AG04450 (cell line): ENCODE measurements at regions of chr2 and their contacts with region 1.

Region 1: GRCh38 chr2:86221066-86221684 is 21.9 kb downstream of the MRPL35 start:
- DNase-seq: no peak
- H3K4me3 ChIP-seq: no peak overlapping the region
- H3K27ac ChIP-seq: no peak overlapping the region
- H3K27me3 ChIP-seq: no peaks in the 10 kb centered on the region
- CTCF ChIP-seq: peak; percentile 92

Region 2: DNA sequence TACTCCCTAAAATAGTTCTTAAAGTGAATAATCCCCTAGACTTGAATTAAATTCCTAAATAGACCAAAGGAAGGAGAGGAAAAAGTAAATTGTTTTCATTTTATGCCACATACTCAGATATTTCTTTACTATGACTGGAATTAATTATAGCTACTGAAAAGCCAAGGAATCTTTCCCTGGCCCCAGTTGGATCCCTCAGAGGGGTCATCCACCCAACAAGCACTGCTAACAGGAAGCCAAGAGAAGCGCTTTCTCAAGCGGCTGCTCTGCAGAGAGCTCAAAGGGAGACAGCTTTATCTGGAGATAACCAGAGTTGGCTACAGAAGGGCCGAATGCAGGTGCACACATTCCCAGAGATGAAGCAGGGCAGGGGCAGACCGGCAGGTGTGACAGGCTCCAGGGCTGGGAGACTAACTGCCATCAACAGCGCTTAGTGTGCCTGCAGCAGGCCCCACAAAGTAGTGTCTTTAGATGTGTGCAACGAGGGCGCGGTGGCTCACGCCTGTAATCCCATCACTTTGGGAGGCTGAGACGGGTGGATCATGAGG is 166.6 kb before region 1 on chr2:
- CTCF ChIA-PET with region 1: no interaction called
- POLR2A ChIA-PET with region 1: no interaction called
- DNase-seq: no peak
- H3K4me3 ChIP-seq: no peak overlapping the region
- H3K27ac ChIP-seq: no peak overlapping the region
- H3K27me3 ChIP-seq: no peaks in the 10 kb centered on the region
- CTCF ChIP-seq: no peak

Region 3: DNA sequence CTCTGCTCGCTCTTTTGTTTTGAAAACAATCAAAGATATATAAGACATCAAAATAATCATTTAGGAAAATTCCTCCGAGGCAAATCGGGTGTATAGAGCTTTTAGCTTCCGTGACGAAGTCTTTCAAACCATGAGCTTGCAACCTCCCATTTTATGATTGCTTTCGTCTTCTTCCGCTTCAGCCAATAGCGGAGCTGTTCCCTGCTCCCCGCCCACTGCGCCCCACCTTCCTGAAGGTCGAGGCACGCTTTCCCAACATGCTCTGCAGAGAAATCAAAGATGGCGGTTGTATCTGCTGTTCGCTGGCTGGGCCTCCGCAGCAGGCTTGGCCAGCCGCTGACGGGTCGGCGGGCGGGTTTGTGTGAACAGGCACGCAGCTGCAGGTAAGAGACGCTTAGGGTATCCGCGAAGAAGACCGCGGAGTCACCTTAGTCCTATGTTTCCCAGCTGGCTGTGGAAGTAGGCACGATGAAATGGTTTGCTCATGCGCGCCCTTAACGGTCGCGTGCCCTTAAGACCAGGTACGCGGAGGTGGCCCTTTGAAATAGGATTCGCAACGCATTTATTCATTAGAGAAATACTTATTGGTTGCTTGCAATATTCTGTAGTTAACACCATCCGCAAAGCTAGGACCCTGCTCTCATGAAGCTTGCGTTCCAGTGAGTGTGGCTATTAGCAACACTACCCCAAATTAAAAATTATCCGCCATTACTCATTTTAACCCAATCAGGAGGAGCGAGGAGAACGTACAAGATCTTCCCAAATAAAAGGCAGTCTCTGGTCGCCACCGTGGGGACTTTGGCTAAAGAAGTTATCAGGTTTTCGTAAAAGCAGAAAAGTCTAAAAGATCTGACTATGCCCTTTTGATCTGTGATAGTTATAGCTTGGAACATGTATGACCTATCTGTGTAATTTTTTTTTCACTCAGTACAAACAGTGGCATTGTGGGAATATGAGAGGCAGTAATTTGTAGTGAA is 114.9 kb before region 1 on chr2 and contains the start of gene PTCD3:
- CTCF ChIA-PET with region 1: no interaction called
- POLR2A ChIA-PET with region 1: no interaction called
- DNase-seq: peak; percentile 81
- H3K4me3 ChIP-seq: peak within 1 kb of the TSS; percentile 93
- H3K27ac ChIP-seq: peak within 1 kb of the TSS; percentile 69
- H3K27me3 ChIP-seq: no peaks in the 10 kb centered on the region
- CTCF ChIP-seq: no peak
- polyA plus RNA-seq, gene PTCD3: 71.8 and 90.2 TPM in 2 replicates

Region 4: GRCh38 chr2:86323273-86324021 is 102.3 kb after region 1 on chr2:
- CTCF ChIA-PET with region 1: no interaction called
- POLR2A ChIA-PET with region 1: no interaction called
- DNase-seq: no peak
- H3K4me3 ChIP-seq: no peak overlapping the region
- H3K27ac ChIP-seq: no peak overlapping the region
- H3K27me3 ChIP-seq: peaks cover 4% of the 10 kb centered on the region
- CTCF ChIP-seq: no peak

Region 5: DNA sequence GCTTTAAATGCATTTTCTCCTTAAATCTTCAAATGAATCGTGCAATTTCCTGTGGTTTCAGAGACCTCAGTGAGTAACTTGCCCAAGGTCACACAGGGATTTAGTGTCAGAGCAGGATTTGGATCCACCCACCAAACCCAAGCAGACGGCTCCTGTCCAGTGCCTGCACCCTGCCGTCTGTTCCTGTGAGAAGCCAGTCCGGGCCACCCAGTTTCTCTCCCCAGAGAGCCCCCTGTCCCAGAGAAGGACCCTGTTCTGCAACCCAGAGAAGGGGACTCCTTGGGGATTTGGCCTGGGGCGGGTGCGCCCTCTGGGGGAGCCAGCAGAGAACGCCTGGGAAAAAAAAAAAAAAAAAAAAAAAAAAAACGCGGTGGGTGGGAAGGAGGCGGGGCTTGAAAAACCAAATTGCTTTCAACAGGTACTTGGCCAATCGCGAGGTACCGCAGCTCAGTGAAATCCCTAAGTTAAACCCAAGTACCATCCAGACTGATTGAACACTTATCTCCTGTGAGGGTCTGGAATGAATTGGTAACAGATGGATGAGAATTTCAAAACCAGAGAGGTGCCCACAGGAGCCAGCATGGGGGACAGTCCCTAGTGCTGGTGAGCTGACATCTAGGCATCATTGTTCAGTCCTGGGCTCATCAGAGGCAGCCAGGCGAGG is 147.1 kb after region 1 on chr2:
- CTCF ChIA-PET with region 1: interaction called, 120 read pairs
- POLR2A ChIA-PET with region 1: no interaction called
- DNase-seq: no peak
- H3K4me3 ChIP-seq: no peak overlapping the region
- H3K27ac ChIP-seq: no peak overlapping the region
- H3K27me3 ChIP-seq: peaks cover 3% of the 10 kb centered on the region
- CTCF ChIP-seq: peak; percentile 68

Region 6: DNA sequence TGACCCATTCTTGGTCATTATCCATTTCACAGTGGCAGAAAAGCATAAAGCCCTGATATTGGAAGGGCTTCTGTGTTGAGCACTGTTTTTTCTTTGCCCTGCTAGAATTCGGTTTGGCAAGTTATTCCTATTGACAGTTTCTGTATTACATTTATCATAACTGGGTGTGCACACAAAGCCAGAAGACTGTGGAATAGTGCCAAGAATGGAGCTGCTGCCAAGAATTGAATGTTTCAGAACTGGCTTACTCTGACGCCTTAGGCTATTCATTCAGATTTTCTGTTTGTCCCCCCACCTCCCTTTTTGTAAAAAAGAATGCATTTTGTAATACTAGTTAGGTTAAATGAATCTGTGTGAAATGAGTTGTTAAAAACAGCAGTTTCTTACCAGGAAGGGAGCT is 232.7 kb after region 1 on chr2:
- CTCF ChIA-PET with region 1: interaction called, 12 read pairs
- POLR2A ChIA-PET with region 1: no interaction called
- DNase-seq: no peak
- H3K4me3 ChIP-seq: no peak overlapping the region
- H3K27ac ChIP-seq: no peak overlapping the region
- H3K27me3 ChIP-seq: no peaks in the 10 kb centered on the region
- CTCF ChIP-seq: no peak